ENCODE measurements at regions of chr2 and their contacts with region 1.

Region 1: DNA sequence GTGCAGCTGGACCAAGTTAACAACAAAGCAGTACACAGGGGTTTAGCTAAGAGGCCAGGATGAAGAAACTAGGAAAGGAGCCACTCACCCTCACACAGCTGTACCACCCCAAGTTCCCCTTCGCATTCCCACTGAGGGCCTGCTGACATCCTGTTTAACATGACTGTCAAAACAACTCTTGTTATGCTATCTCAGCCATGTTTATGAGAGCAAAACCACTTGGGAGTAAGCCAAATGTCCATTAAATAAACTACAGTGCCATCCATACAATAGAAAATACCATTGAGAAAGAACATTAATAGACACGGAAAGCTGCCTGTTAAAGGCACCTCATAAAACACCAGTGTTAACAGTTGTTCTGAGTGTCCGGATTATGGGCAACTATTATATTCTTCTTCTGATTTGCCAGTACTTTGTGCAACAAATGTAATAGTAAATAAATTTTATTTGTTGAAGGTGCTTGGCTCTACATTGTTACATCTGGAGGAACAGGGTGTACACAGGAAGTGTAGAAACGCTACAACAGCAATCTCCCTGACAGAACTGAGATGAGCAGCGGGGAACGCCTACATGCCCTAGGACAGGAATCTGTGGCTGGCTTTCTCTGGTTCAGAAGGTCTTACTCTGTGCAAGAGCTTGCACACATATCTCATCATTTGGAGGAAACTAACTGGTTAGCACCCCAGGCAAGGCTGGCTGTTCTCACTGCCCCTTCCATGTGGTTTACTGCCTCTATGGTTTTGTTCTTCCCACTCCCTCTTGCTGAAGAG is 85.6 kb downstream of the EHD3 start:
- DNase-seq: peak in 5 of 9 donors; percentile 11 to 32 (median 15)
- ATAC-seq: peak; percentile 68
- H3K4me3 ChIP-seq: no peak overlapping the region
- H3K4me3 Mint-ChIP-seq: peak overlapping the region; percentile 7 to 72 (median 61)
- H3K27ac ChIP-seq: no peak overlapping the region
- H3K27ac Mint-ChIP-seq: peak overlapping the region; percentile 65 to 92 (median 73)
- H3K4me1 ChIP-seq: peaks cover 34 to 42% of the 10 kb centered on the region in 2 donors
- H3K4me1 Mint-ChIP-seq: peaks cover 42 to 69% (median 64%) of the 10 kb centered on the region in 7 donors
- H3K27me3 ChIP-seq: no peaks in the 10 kb centered on the region
- H3K27me3 Mint-ChIP-seq: no peaks in the 10 kb centered on the region

Region 2: GRCh38 chr2:31233741-31234682 is 85.6 kb before region 1 on chr2 and contains the start of gene EHD3:
- CTCF ChIA-PET with region 1: no interaction called
- POLR2A ChIA-PET with region 1: no interaction called
- intact Hi-C with region 1: loop called (anchors 2 to 5 kb)
- DNase-seq: peak; percentile 53 to 80 (median 67)
- ATAC-seq: peak; percentile 95
- H3K4me3 ChIP-seq: peak within 1 kb of the TSS; percentile 75
- H3K4me3 Mint-ChIP-seq: peak within 1 kb of the TSS; percentile 74 to 89 (median 83)
- H3K27ac ChIP-seq: peak within 1 kb of the TSS; percentile 32
- H3K27ac Mint-ChIP-seq: peak within 1 kb of the TSS; percentile 12 to 85 (median 72)
- H3K4me1 ChIP-seq: peaks cover 4 to 14% of the 10 kb centered on the region in 2 donors
- H3K4me1 Mint-ChIP-seq: peaks cover 8 to 33% (median 25%) of the 10 kb centered on the region in 7 donors
- H3K27me3 ChIP-seq: no peaks in the 10 kb centered on the region
- H3K27me3 Mint-ChIP-seq: peaks cover 0 to 22% (median 0%) of the 10 kb centered on the region in 5 donors
- total RNA-seq, gene EHD3: 1.6 to 4.5 (median 3.5) TPM

Region 3: GRCh38 chr2:31282634-31283033 is 37.0 kb before region 1 on chr2:
- CTCF ChIA-PET with region 1: no interaction called
- POLR2A ChIA-PET with region 1: no interaction called
- intact Hi-C with region 1: loop called in 1 of 2 experiments (anchors 5 kb)
- DNase-seq: no peak
- ATAC-seq: no peak
- H3K4me3 ChIP-seq: no peak overlapping the region
- H3K4me3 Mint-ChIP-seq: no peak overlapping the region
- H3K27ac ChIP-seq: no peak overlapping the region
- H3K27ac Mint-ChIP-seq: no peak overlapping the region
- H3K4me1 ChIP-seq: no peaks in the 10 kb centered on the region
- H3K4me1 Mint-ChIP-seq: peaks cover 0 to 6% (median 0%) of the 10 kb centered on the region in 7 donors
- H3K27me3 ChIP-seq: no peaks in the 10 kb centered on the region
- H3K27me3 Mint-ChIP-seq: peaks cover 0 to 5% (median 4%) of the 10 kb centered on the region in 5 donors

Region 4: DNA sequence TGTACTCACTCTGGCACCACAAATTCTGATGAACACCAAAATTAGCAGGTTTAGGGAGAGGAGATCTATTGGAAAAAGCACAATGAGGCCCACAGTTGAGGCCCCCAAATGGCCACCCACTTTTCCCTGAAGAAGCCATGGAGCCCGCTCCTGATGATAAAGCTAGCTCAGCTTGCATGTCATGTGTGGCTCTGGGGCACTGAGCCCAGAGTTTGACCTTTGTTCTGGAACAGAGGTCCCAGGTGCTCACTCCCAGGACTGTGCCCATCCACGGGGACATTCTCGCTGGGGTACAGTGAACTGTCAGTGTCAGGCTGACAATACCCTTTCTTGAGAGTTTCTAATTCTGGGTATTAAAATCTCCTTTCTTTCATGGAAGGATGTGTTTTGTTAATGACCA is 58.8 kb after region 1 on chr2:
- CTCF ChIA-PET with region 1: no interaction called
- POLR2A ChIA-PET with region 1: no interaction called
- intact Hi-C with region 1: no loop called
- DNase-seq: no peak
- ATAC-seq: no peak
- H3K4me3 ChIP-seq: no peak overlapping the region
- H3K4me3 Mint-ChIP-seq: no peak overlapping the region
- H3K27ac ChIP-seq: no peak overlapping the region
- H3K27ac Mint-ChIP-seq: no peak overlapping the region
- H3K4me1 ChIP-seq: no peaks in the 10 kb centered on the region
- H3K4me1 Mint-ChIP-seq: peaks cover 0 to 28% (median 0%) of the 10 kb centered on the region in 7 donors
- H3K27me3 ChIP-seq: no peaks in the 10 kb centered on the region
- H3K27me3 Mint-ChIP-seq: peaks cover 0 to 9% (median 1%) of the 10 kb centered on the region in 5 donors